PC-3 (cell line): ENCODE measurements at regions of chr2 and their contacts with region 1.

Region 1: GRCh38 chr2:144438801-144439631 is 80.9 kb downstream of the ZEB2 start:
- DNase-seq: no peak
- ATAC-seq: no peak
- H3K4me3 ChIP-seq: no peak overlapping the region
- H3K27ac ChIP-seq: no peak overlapping the region
- H3K4me1 ChIP-seq: peaks cover 21% of the 10 kb centered on the region
- H3K27me3 ChIP-seq: no peaks in the 10 kb centered on the region
- CTCF ChIP-seq: no peak

Region 2: GRCh38 chr2:144516981-144517865 is 78.2 kb after region 1 on chr2:
- CTCF ChIA-PET with region 1: no interaction called
- POLR2A ChIA-PET with region 1: no interaction called
- intact Hi-C with region 1: loop called (anchors 5 kb)
- DNase-seq: peak; percentile 43
- ATAC-seq: peak; percentile 59; the same call in 1 of the 2 replicates
- H3K4me3 ChIP-seq: peak overlapping the region; percentile 62
- H3K27ac ChIP-seq: no peak overlapping the region
- H3K4me1 ChIP-seq: peaks cover 14% of the 10 kb centered on the region
- H3K27me3 ChIP-seq: peaks cover 40% of the 10 kb centered on the region
- CTCF ChIP-seq: no peak